Thyroid gland (tissue), 4 donors: ENCODE measurements at regions of chr2 and their contacts with region 1.

Region 1: DNA sequence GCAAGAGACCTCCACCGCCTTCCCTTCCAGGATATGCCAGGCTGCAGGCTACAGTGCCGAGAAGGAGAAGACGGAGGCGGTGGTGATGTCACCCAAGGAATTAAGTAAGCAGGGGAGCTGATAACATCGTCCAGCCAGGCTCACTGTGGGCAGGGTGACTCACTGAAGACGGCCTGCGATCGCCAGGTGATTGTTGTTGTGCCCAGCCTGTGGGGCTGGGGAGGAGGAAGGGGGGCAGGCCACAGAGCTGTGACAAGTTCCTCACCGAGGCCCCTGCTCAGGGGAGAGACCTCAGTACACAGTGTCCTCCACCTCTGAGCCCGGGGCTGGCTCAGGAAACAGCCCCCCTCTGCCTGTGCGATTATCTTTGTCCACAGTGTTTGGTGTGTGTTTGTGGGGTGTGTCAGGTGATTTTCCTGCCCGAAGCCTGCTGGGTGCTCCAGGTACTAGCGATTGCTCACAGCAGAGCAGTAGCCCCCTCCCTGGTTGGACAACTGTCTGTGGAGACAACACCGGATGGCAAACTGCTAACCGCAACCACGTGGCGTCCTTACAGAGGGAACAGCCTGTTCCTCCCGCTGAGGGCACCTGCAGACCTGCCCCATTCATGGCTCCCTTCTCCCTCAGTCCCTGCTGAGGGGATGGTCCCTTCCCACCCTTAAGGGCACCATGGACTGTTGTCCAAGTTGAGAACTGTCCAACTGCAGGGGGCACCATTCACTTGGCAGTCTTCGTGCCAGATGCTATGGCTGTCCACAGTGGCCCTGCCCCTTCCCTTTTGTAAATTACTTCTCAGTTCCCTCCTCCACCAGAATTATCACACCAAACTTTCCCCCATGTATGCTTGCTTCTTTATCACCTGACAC is 95.1 kb downstream of the ZFP36L2 start:
- DNase-seq: peak; percentile 60 to 67
- H3K4me3 ChIP-seq: no peak overlapping the region
- H3K27ac ChIP-seq: peak overlapping the region; percentile 30 to 56 (median 50)
- H3K4me1 ChIP-seq: peaks cover 0 to 55% of the 10 kb centered on the region in 2 donors
- H3K27me3 ChIP-seq: no peaks in the 10 kb centered on the region
- CTCF ChIP-seq: peak in 4 of 6 experiments; percentile 36 to 61 (median 46)
- POLR2A ChIP-seq: no peak

Region 2: DNA sequence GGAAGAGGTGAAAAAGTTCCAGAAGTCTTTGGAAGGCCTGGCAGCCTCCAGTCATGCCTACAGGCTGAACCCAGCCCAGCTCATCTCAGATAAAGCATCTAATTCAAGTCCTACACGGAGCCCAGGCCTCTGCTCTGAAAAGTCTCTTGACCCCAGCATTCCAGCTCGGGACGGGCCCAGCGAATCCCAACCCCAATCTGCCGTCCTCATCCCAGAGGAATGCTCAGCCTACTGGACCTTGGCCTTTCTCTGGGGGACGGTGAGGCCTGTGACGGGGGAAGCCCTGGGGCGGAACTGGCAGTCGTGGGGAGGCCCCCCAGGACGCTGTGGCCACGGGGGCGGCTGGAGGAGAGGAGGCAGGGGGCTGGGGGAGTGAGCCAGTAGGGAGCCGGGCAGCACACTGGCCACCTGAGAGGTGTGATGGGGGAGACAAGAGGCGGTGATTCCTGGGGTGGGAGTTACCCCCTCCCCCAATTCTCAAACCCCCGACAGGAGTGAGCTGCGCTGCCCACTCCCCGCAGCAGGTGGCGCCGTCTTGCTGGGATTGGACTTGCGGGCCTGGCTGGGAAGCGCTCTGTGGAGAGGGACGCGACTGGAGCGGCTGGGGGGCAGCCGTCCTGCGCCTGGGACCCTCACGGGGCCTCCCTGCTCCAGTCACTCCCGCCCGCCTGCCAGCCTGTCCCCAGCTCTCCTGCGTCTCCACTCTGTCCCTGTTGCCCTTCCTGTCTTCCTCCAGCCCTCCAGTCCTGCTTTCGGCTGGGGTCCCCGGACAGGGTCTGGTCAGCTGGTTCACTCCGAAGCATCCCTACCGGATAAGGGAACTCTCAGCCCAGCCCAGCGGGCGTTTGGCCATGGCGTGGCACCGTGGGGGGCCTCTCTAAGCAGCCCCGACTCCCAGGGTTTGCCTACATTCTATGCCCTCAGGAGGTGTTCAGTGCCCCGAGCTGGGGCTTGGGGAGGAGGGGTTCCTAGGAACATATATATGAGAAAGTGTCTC is 156.2 kb before region 1 on chr2:
- intact Hi-C with region 1: loop called (anchors 10 kb)
- DNase-seq: peak; percentile 78 to 79
- H3K4me3 ChIP-seq: peak overlapping the region in 1 of 3 donors; percentile 12
- H3K27ac ChIP-seq: peak overlapping the region in 2 of 3 donors; percentile 39 to 66
- H3K4me1 ChIP-seq: peaks cover 13 to 14% of the 10 kb centered on the region in 2 donors
- H3K27me3 ChIP-seq: no peaks in the 10 kb centered on the region
- CTCF ChIP-seq: peak; percentile 78 to 96 (median 91)
- POLR2A ChIP-seq: no peak

Region 3: GRCh38 chr2:43169987-43170386 is 38.7 kb after region 1 on chr2:
- intact Hi-C with region 1: no loop called
- DNase-seq: no peak
- H3K4me3 ChIP-seq: no peak overlapping the region
- H3K27ac ChIP-seq: peak overlapping the region in 2 of 3 donors; percentile 45 to 50
- H3K4me1 ChIP-seq: peaks cover 6 to 32% of the 10 kb centered on the region in 2 donors
- H3K27me3 ChIP-seq: no peaks in the 10 kb centered on the region
- CTCF ChIP-seq: peak in 2 of 6 experiments; percentile 6 to 40
- POLR2A ChIP-seq: no peak